IMR-90 (cell line): ENCODE measurements at regions of chr6 and their contacts with region 1.

Region 1: GRCh38 chr6:43193939-43194338 is 11.9 kb downstream of the CUL9 start:
- DNase-seq: no peak
- ATAC-seq: no peak
- H3K4me3 ChIP-seq: no peak overlapping the region
- H3K27ac ChIP-seq: no peak overlapping the region
- H3K4me1 ChIP-seq: no peaks in the 10 kb centered on the region
- H3K27me3 ChIP-seq: no peaks in the 10 kb centered on the region
- CTCF ChIP-seq: no peak
- POLR2A ChIP-seq: no peak
- RAD21 ChIP-seq: no peak

Region 2: DNA sequence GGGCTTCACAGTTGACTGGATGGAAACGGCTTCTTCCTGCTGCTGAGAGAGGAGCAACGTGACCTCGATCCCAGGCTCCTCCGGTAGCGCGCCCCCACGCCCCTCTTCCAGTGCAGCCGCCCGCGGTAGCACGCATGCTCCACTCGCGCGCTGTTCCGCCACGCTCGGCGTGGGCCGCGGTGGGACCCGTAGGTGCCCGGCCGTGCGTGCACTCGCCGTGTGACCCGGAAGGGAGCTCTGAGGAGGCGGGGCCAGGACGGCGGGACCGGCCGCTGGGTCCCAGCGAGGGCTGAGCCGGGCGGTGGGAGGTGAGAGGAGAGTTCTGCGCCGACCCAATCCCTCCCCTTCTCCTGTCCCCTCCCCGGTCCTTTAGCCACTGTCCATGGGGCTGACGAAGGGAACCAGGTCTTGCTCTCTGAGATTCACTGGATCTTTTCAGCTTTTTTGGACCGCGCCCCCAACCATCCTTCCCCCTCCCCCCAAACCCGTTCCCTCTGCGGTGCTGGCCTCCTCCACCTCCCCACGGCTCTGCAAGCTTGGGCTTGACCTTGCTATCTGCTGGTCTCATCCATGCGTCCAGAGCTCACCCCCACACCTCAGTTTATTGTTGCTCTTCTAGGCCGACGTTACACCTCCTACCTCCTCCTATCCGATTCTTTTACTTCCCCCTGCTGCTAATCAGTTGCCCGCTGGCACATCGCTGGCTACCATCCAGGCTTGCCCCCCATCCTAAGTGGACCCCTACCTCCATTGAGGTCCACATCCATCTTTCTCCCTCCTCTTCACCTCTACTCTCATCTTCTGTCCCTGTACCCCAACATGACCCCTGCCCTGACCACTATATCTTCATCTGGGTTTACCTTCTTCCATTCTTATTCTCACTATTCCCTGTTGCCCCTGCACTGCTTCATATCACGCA is 11.7 kb before region 1 on chr6 and contains the start of gene CUL9:
- CTCF ChIA-PET with region 1: no interaction called
- POLR2A ChIA-PET with region 1: interaction called, 14 read pairs
- dilution Hi-C with region 1: no loop called
- in situ Hi-C with region 1: no loop called
- intact Hi-C with region 1: no loop called
- DNase-seq: peak; percentile 58
- ATAC-seq: peak; percentile 96
- H3K4me3 ChIP-seq: peak within 1 kb of the TSS; percentile 90
- H3K27ac ChIP-seq: peak within 1 kb of the TSS; percentile 79
- H3K4me1 ChIP-seq: peaks cover 2% of the 10 kb centered on the region
- H3K27me3 ChIP-seq: no peaks in the 10 kb centered on the region
- CTCF ChIP-seq: no peak
- POLR2A ChIP-seq: peak; percentile 37; the same call in 1 of the 2 replicates
- RAD21 ChIP-seq: no peak
- total RNA-seq, gene CUL9: 6.1 and 7.7 TPM in 2 replicates